MCF 10A (cell line): ENCODE measurements at regions of chr12 and their contacts with region 1.

Region 1: DNA sequence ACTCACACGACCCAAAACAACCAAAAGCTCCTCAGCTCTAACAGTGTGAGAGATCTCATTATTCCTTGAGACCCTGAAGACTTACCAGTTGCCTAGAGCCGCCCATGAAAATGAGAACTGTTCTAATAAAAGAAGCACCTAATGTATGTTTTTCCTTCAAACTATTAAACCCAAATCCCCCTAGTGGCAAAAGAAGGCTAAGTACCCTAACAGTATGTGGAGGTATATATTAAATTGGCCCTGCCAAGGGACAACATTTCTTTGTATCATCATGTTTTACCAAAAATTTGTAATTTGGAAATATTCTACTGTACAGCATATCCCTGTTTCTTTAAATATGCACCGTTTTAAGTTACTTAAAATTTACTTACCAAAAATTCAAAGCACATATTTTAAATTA is 38.0 kb upstream of the PPFIA2 start:
- DNase-seq: peak; percentile 55
- H3K4me3 Mint-ChIP-seq: no peak overlapping the region
- H3K27ac Mint-ChIP-seq: no peak overlapping the region
- H3K4me1 Mint-ChIP-seq: no peaks in the 10 kb centered on the region
- H3K27me3 Mint-ChIP-seq: peaks cover 40% of the 10 kb centered on the region
- CTCF ChIP-seq: peak; percentile 31

Region 2: DNA sequence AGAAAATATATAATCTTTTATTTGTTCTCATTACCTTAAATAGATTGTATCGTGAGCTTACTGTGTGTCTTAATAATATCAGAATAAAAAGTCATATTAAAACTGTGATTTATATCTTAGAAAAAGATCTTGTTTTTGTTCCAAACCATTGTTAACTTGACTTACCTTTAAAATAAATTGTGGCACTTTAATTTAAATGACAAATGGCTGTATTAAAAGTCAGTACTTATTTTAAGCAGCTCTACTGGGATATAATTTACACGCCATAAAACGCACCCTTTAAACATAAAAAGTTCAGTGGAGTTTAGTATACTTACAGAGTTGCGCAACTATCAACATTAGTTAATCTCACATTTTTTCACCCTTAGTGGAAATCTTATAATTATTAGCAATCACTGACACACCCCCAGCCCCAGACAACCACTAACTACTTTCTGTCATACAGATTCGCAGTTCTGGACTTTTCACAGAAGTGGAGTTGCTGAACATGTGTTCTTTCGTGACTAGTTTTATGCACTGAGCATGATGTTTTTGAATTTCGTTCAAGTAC is 407.5 kb before region 1 on chr12:
- CTCF ChIA-PET with region 1: no interaction called
- POLR2A ChIA-PET with region 1: no interaction called
- intact Hi-C with region 1: no loop called
- DNase-seq: no peak
- H3K4me3 Mint-ChIP-seq: no peak overlapping the region
- H3K27ac Mint-ChIP-seq: no peak overlapping the region
- H3K4me1 Mint-ChIP-seq: no peaks in the 10 kb centered on the region
- H3K27me3 Mint-ChIP-seq: no peaks in the 10 kb centered on the region
- CTCF ChIP-seq: no peak

Region 3: DNA sequence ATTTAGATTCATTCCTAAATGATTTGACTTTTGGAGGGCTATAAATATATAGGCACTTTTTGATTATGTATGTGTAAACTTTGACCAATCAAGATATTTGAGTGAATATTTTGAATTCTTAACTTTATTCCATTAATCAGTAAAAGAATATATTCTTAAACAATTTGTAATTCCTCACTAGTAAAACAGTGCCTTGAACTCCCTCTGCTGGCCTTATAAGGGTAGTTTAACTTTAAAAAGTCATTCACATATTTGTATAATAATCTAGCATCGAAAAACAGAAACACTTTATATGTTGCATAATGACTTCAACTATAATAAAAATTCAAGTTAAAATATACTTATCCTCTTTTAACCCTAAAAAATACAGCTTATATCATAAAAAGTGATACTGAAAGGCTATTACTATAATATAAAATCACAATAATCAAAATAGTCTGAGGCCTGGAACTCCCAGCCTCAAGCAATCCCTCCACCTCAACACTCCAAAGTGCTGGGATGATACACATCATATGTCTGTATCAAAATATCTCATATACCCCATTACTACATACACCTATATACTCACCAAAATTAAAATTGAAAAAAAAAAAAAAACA is 529.9 kb after region 1 on chr12:
- CTCF ChIA-PET with region 1: no interaction called
- POLR2A ChIA-PET with region 1: no interaction called
- intact Hi-C with region 1: loop called (anchors 2 kb)
- DNase-seq: peak; percentile 54
- H3K4me3 Mint-ChIP-seq: no peak overlapping the region
- H3K27ac Mint-ChIP-seq: no peak overlapping the region
- H3K4me1 Mint-ChIP-seq: no peaks in the 10 kb centered on the region
- H3K27me3 Mint-ChIP-seq: no peaks in the 10 kb centered on the region
- CTCF ChIP-seq: peak; percentile 55

Region 4: GRCh38 chr12:82358200-82359114 is 561.4 kb after region 1 on chr12 and contains the starts of genes CCDC59 and METTL25:
- CTCF ChIA-PET with region 1: no interaction called
- POLR2A ChIA-PET with region 1: no interaction called
- intact Hi-C with region 1: loop called (anchors 5 kb)
- DNase-seq: peak; percentile 98
- H3K4me3 Mint-ChIP-seq: peak within 1 kb of the TSS; percentile 86
- H3K27ac Mint-ChIP-seq: peak within 1 kb of the TSS; percentile 99
- H3K4me1 Mint-ChIP-seq: peaks cover 6% of the 10 kb centered on the region
- H3K27me3 Mint-ChIP-seq: no peaks in the 10 kb centered on the region
- CTCF ChIP-seq: peak; percentile 88
- total RNA-seq, gene CCDC59: 72.5 and 85.7 TPM in 2 replicates
- total RNA-seq, gene METTL25: 3.4 and 4.1 TPM in 2 replicates